ENCODE measurements at regions of chr14 and their contacts with region 1.

Region 1: GRCh38 chr14:61925043-61925442 is 162.8 kb downstream of the SNAPC1 start:
- DNase-seq: no peak
- H3K4me3 ChIP-seq: no peak overlapping the region
- H3K27ac ChIP-seq: no peak overlapping the region
- H3K4me1 ChIP-seq: peaks cover 0 to 7% (median 1%) of the 10 kb centered on the region in 4 experiments; a peak in 5 of 7 replicates
- H3K27me3 ChIP-seq: no peaks in the 10 kb centered on the region; a peak in 1 of 7 replicates
- CTCF ChIP-seq: peak in 2 of 3 experiments; percentile 60 to 68; a peak in 3 of 4 replicates
- EP300 ChIP-seq: no peak
- POLR2A ChIP-seq: no peak
- RAD21 ChIP-seq: peak; percentile 75 to 81

Region 2: DNA sequence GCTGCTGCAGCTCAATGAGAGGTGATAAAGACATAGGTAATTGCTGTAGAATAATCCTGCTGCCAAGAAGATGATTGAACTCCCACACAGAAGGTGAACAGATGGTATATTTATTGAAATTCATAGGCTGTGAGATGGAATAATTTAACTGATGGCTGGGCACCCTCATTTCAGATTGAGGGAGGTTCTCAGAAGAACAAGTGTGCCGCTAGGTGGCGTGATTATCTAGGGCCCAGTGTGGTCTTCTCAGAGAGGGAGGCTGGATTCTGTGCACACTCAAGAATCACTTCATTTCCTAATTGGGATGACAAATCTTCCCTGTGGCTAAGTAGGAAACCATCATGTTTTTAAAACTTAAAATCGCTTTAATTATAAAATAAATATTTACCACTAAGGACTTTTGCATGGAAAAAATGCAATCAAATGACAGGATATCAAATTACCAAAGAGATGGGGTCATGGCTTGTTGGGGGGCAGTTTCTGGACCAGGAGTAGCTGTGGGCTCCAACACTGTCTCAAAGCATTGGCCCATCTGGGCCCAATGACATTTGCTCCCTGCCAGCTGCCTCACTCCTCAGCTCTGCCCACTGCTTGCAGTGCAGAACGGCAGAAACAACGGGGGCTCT is 30.5 kb before region 1 on chr14:
- CTCF ChIA-PET with region 1: interaction called, 19 read pairs
- POLR2A ChIA-PET with region 1: no interaction called
- DNase-seq: peak in 1 of 2 experiments; percentile 69
- H3K4me3 ChIP-seq: no peak overlapping the region
- H3K27ac ChIP-seq: no peak overlapping the region
- H3K4me1 ChIP-seq: 0 out of 7 replicates have a peak, but pooled peaks cover 0 to 11% (median 0%) of the 10 kb centered on the region in 4 experiments
- H3K27me3 ChIP-seq: no peaks in the 10 kb centered on the region
- CTCF ChIP-seq: peak; percentile 59 to 75 (median 59)
- EP300 ChIP-seq: no peak
- POLR2A ChIP-seq: no peak
- RAD21 ChIP-seq: peak; percentile 64 to 72

Region 3: DNA sequence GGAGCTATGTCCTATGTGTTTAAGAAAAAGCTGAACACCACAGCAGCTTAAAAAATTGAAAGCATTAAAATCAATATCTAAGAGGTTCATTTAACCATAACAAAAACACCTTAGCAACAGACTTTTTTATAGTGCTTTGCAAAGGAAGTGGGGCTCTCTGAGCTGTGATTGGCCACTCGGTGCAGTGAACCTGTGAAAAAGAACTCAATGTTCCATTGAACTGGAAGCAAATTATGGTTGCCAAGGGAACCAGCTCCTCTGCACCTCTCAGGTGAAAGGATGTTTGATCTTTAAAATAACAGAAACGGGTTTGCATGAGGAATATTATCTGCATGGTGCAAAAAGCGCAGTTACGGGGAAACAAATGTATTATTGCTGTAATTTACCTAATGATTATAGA is 13.5 kb before region 1 on chr14:
- CTCF ChIA-PET with region 1: interaction called, 10 read pairs
- POLR2A ChIA-PET with region 1: no interaction called
- DNase-seq: no peak
- H3K4me3 ChIP-seq: no peak overlapping the region
- H3K27ac ChIP-seq: no peak overlapping the region
- H3K4me1 ChIP-seq: no peaks in the 10 kb centered on the region
- H3K27me3 ChIP-seq: no peaks in the 10 kb centered on the region
- CTCF ChIP-seq: no peak
- EP300 ChIP-seq: no peak
- POLR2A ChIP-seq: no peak
- RAD21 ChIP-seq: no peak

Region 4: DNA sequence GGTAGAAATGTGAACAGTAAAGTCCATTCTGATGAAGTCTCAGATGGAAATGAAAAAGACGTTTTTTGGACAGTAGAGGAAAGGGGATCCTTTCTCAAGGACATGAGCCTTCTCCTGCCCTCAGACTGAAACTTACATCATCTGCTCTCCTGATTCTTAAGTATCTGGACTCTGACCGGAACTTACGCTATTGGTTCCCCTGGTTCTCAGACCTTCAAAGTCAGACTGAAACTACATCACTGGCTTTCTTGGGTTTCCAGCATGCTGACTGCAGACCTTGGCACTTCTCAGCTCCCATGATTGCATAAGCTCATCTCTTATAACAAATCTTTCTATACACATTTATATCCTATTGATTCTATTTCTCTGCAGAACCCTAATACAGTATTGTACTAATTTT is 128.1 kb after region 1 on chr14:
- CTCF ChIA-PET with region 1: no interaction called
- POLR2A ChIA-PET with region 1: no interaction called
- DNase-seq: no peak
- H3K4me3 ChIP-seq: no peak overlapping the region
- H3K27ac ChIP-seq: no peak overlapping the region
- H3K4me1 ChIP-seq: no peaks in the 10 kb centered on the region
- H3K27me3 ChIP-seq: no peaks in the 10 kb centered on the region
- CTCF ChIP-seq: no peak
- EP300 ChIP-seq: no peak
- POLR2A ChIP-seq: no peak
- RAD21 ChIP-seq: no peak

Region 5: DNA sequence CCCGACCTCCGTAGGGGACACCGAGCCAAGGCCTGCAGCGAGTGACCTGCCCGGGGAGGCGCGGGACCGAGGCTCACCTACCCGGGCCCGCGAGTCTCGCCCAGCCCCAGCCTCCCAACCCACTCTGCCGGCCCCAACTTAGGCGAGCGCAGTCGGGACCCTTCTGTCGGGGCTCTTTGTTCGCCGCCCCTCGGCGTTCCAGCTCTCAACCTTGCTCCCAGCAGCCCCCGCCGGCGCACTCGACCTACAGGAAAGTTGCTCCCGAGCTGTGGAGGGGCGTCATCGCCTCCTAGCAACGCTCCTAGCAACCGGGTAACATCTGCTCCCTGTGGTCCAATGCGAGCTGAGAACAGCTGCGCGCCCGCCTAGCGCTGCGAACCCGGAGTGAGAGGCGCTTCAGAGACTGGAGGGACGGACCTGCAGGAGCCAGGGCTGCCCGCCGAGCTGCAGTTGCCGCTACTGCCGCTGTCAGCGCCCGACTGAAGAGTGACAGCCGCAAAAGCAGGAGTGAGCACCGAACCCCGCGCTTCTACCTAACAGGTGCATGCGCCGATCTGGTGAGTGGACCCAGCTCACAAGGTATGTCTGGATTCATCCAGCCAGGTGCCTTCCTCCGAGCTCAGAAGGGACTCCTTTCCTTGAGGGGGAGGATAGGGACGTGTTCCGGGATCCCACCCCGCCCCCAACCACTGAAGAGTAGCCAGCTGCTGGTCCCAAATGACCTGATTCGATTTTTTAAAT is 192.1 kb after region 1 on chr14:
- CTCF ChIA-PET with region 1: interaction called, 11 read pairs
- POLR2A ChIA-PET with region 1: interaction called, 3 read pairs
- DNase-seq: peak; percentile 91 to 93
- H3K4me3 ChIP-seq: peak overlapping the region; percentile 54 to 79 (median 60)
- H3K27ac ChIP-seq: no peak overlapping the region
- H3K4me1 ChIP-seq: no peaks in the 10 kb centered on the region; a peak in 2 of 7 replicates
- H3K27me3 ChIP-seq: peaks cover 1 to 26% (median 15%) of the 10 kb centered on the region in 4 experiments
- CTCF ChIP-seq: peak; percentile 47 to 62 (median 49)
- EP300 ChIP-seq: 0 out of 3 replicates have a peak, but pooled peaks of 1 of the 2 experiments have one; percentile 22
- POLR2A ChIP-seq: no peak
- RAD21 ChIP-seq: peak; percentile 38 to 39

Measured in H1 (cell line).